ENCODE measurements at regions of chr7 and their contacts with region 1.

Region 1: DNA sequence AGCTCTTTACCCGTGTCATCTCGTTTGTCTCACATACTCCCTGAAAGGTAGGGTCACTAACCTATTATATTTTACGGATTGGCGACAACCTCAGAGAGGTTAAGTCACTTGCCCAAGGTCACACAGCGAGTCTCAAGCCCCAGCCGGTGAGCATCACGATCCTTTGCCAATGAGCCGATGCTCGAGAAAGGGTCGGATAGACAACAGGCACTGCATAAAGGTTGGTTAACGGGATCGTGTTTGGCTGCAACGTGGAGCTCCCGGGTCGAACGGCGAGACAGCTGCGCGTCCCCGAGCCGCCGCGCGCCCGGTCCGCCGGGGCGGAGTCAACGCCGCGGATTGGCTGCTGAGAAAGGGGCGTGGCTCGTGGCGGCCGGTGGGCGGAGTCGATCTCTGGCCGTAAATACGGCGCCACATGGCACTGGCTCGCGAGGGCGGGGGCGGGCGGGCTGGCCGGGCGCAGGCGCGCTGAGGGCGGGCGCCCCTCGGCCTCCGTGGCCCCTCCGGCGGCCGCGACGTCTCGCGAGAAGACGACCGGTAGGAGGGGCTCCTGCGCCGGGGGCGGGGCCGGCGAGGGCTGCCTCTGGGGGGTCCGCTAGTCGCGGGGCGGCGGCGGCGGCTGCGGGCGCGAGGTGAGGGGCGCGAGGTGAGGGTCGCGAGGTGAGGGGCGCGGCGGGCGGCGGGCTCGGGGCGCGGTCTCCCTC is at the start of gene CHST12:
- DNase-seq: peak; percentile 94
- H3K4me3 Mint-ChIP-seq: peak within 1 kb of the TSS; percentile 90
- H3K27ac Mint-ChIP-seq: peak within 1 kb of the TSS; percentile 78
- H3K4me1 Mint-ChIP-seq: peaks cover 51% of the 10 kb centered on the region
- H3K27me3 Mint-ChIP-seq: no peaks in the 10 kb centered on the region
- total RNA-seq, gene CHST12: 9.9 and 10.6 TPM in 2 replicates

Region 2: DNA sequence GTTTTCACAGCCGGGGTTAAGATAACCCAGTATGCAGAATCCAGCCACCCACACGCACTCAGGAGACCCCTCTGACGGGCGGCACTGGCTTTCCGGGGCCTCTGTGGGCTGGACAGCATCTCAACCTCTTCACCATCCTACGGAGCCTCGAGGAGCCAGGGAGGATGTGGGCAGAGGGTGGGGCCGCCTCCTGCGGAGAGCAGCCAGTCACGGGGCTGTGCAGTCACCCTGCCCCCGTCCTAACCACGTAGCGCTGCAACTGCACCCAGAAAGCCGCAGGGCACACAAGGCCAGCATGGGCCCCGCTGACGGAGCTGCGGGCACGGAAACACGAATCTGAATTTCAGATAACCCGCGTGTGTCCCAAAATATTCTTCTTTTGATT is 462.8 kb before region 1 on chr7:
- intact Hi-C with region 1: loop called (anchors 5 kb)
- DNase-seq: peak; percentile 90
- H3K4me3 Mint-ChIP-seq: peak overlapping the region; percentile 84
- H3K27ac Mint-ChIP-seq: peak overlapping the region; percentile 87
- H3K4me1 Mint-ChIP-seq: peaks cover 55% of the 10 kb centered on the region
- H3K27me3 Mint-ChIP-seq: peaks cover 2% of the 10 kb centered on the region

Region 3: DNA sequence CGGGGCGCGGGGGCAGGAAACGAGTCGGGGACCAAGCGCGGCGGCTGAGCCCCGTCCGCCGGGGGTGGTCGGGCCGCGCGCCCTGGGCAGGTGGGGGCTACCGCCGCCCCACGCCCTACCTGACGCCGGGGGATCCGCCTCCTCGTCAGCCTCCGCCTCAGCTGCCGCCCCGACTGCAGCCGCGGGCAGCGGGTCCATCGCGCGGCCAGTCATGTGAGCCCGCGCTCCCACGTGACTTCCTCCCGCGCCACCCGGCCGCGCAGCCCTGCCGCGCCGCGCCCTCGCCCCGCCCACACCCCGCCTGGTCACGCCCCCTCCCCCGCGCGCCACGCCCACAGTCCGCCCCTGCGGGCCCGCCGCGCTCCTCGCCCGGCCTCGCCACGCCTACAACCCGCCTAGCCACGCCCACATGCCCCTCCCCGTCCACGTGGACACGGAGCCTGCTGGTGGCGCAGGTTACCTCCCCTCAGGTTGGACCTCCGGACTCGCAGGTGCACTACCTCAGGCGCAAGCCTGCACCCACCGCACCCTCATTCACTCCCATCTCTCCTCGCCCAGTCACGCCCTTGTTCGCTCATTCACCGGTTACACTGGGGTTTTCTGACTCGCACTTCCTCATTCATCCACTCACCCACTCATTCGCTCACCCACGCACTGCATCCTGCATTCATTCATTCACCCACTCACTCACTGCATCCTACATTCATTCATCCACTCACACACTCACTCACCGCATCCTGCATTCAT is 88.8 kb before region 1 on chr7 and contains the start of gene SNX8:
- intact Hi-C with region 1: loop called (anchors 1 kb)
- DNase-seq: peak; percentile 93
- H3K4me3 Mint-ChIP-seq: peak within 1 kb of the TSS; percentile 91
- H3K27ac Mint-ChIP-seq: peak within 1 kb of the TSS; percentile 87
- H3K4me1 Mint-ChIP-seq: peaks cover 8% of the 10 kb centered on the region
- H3K27me3 Mint-ChIP-seq: no peaks in the 10 kb centered on the region
- total RNA-seq, gene SNX8: 40.8 and 41.8 TPM in 2 replicates

Region 4: DNA sequence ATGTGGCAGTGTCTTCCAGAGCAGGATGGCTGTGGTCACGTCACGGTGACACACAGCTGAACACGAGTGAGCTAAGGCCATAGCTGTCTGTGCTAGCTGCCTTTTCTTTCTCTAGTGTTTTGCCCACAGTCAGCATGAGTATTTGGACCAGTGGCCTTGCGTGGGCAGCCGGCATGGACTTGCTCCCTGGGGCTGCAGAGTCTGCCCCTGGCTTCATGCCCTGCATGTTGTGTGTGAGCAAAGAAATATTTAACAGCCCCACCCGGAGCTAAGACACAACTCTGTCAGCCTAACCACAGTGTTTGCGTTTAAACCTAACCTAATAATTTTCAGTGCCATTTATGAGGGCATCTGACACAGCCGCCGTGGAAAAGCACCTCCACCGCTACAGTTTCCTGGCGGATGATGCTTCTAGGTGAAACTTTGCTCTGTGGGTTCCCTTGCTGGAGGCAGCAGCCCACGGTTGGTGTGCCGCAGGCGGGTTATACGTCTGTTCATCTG is 14.9 kb after region 1 on chr7:
- intact Hi-C with region 1: loop called (anchors 1 kb)
- DNase-seq: peak; percentile 30
- H3K4me3 Mint-ChIP-seq: peak overlapping the region; percentile 66
- H3K27ac Mint-ChIP-seq: peak overlapping the region; percentile 68
- H3K4me1 Mint-ChIP-seq: peaks cover 49% of the 10 kb centered on the region
- H3K27me3 Mint-ChIP-seq: no peaks in the 10 kb centered on the region

Region 5: DNA sequence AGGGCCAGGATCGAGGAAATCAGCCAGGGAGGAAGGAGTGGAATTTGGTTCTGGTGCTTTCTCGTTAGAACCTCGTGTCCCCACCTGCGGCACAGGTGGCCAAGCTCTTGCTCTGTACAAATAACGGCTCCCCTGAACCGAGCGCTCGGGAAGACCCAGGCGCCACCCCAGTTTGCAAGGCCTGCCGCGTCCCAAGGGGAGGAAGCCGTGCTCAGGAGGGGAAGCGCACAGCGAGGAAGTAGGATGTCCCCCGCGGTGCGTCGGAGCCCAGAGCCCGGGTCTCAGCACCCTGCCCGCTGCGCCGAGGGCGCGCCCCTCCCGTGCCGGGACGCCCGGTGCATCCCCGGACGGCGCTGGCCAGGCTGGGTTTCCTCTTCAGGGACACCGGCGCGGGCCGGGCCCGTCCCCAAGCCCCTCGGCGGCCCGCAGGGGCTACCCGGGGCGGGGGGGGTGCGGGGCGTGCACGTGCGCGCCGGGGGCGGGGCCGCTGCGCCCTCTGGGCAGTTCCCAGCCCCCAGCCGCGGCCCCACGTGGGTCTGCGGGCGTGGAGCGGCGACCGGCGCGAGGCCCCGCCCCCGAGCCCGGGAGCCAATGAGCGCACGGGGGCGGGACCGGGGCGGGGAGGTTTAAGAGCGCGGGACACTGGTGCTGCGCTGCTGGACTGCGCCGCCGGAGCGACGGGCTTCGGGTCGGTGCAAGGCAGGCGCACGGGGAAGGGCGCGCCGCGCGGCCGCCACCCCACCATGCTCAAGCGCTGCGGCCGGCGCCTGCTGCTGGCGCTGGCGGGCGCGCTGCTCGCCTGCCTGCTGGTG is 116.2 kb after region 1 on chr7 and contains the start of gene LFNG:
- intact Hi-C with region 1: loop called (anchors 1 kb)
- DNase-seq: peak; percentile 84
- H3K4me3 Mint-ChIP-seq: peak within 1 kb of the TSS; percentile 97
- H3K27ac Mint-ChIP-seq: peak within 1 kb of the TSS; percentile 91
- H3K4me1 Mint-ChIP-seq: peaks cover 35% of the 10 kb centered on the region
- H3K27me3 Mint-ChIP-seq: no peaks in the 10 kb centered on the region
- total RNA-seq, gene LFNG: 34.8 and 34.9 TPM in 2 replicates

Region 6: GRCh38 chr7:3103614-3104398 is 700.6 kb after region 1 on chr7:
- intact Hi-C with region 1: loop called (anchors 2 kb)
- DNase-seq: no peak
- H3K4me3 Mint-ChIP-seq: no peak overlapping the region
- H3K27ac Mint-ChIP-seq: peak overlapping the region; percentile 32
- H3K4me1 Mint-ChIP-seq: peaks cover 70% of the 10 kb centered on the region
- H3K27me3 Mint-ChIP-seq: no peaks in the 10 kb centered on the region

Measured in activated T-helper 1 cell treated with anti-CD3 and anti-CD28 coated beads, Interleukin-12 subunit alpha, Interleukin-12 subunit beta, Interleukin-2, Interleukin-4 antibody, amounts not matched to agents 30 ng/mL and 10 ng/mL and 1 ng/mL, durations not matched to agents 14 hours and 24 hours and 36 hours (primary cell).